ENCODE measurements at regions of chr2 and their contacts with region 1.

Region 1: DNA sequence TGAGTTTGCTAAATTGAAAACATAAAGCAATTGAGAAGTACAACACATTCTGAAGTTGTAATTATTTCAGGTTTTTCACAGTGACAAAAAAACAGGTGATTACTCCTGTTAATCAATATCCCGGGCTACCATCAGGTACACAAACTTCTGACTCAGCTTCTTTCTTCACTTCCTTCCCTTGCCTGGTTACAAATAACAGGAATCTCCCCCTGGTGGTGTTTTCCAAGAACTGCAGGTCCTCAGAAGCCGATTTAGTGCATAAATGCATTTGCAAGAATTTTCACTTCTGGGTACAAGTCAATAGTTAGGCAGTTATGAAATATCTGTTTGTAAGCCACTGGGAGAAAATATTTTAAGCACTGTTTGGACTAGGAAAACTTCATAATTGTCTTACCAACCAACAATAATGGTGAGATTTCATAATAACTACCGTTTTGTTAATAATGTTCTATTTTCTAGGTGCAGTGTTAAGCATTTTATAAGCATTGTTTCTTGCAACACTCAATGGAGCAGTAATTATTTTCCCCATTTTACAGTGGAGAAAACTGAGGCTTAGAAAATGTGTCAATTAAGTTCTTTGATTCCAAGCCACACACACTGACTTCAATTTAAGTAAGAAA is 12.4 kb upstream of the GMCL1 start:
- DNase-seq: peak; percentile 80
- H3K4me3 Mint-ChIP-seq: no peak overlapping the region
- H3K27ac Mint-ChIP-seq: no peak overlapping the region
- H3K4me1 Mint-ChIP-seq: peaks cover 9% of the 10 kb centered on the region
- H3K27me3 Mint-ChIP-seq: no peaks in the 10 kb centered on the region

Region 2: GRCh38 chr2:69734035-69734631 is 82.9 kb before region 1 on chr2:
- CTCF ChIA-PET with region 1: interaction called, 13 read pairs
- POLR2A ChIA-PET with region 1: interaction called, 4 read pairs
- DNase-seq: no peak
- H3K4me3 Mint-ChIP-seq: no peak overlapping the region
- H3K27ac Mint-ChIP-seq: no peak overlapping the region
- H3K4me1 Mint-ChIP-seq: peaks cover 3% of the 10 kb centered on the region
- H3K27me3 Mint-ChIP-seq: peaks cover 5% of the 10 kb centered on the region

Region 3: GRCh38 chr2:69741619-69742466 is 75.2 kb before region 1 on chr2 and contains the start of gene ANXA4:
- CTCF ChIA-PET with region 1: interaction called, 31 read pairs
- POLR2A ChIA-PET with region 1: interaction called, 18 read pairs
- DNase-seq: peak; percentile 66
- H3K4me3 Mint-ChIP-seq: peak within 1 kb of the TSS; percentile 84
- H3K27ac Mint-ChIP-seq: peak within 1 kb of the TSS; percentile 88
- H3K4me1 Mint-ChIP-seq: peaks cover 33% of the 10 kb centered on the region
- H3K27me3 Mint-ChIP-seq: peaks cover 8% of the 10 kb centered on the region
- total RNA-seq, gene ANXA4: 86.9 to 90.4 TPM

Region 4: GRCh38 chr2:69829256-69830046 is 12.4 kb after region 1 on chr2 and contains the start of gene GMCL1:
- CTCF ChIA-PET with region 1: interaction called, 7 read pairs
- POLR2A ChIA-PET with region 1: interaction called, 19 read pairs
- DNase-seq: peak; percentile 99
- H3K4me3 Mint-ChIP-seq: peak within 1 kb of the TSS; percentile 85
- H3K27ac Mint-ChIP-seq: peak within 1 kb of the TSS; percentile 93
- H3K4me1 Mint-ChIP-seq: peaks cover 51% of the 10 kb centered on the region
- H3K27me3 Mint-ChIP-seq: no peaks in the 10 kb centered on the region
- total RNA-seq, gene GMCL1: 30.1 to 34.8 TPM

Measured in activated CD4-positive, alpha-beta memory T cell treated with anti-CD3 and anti-CD28 coated beads, Interleukin-2, amount 10 ng/mL, durations not matched to agents 7 days and 5 days (primary cell).